HCT116 (cell line): ENCODE measurements at regions of chr5 and their contacts with region 1.

Region 1: DNA sequence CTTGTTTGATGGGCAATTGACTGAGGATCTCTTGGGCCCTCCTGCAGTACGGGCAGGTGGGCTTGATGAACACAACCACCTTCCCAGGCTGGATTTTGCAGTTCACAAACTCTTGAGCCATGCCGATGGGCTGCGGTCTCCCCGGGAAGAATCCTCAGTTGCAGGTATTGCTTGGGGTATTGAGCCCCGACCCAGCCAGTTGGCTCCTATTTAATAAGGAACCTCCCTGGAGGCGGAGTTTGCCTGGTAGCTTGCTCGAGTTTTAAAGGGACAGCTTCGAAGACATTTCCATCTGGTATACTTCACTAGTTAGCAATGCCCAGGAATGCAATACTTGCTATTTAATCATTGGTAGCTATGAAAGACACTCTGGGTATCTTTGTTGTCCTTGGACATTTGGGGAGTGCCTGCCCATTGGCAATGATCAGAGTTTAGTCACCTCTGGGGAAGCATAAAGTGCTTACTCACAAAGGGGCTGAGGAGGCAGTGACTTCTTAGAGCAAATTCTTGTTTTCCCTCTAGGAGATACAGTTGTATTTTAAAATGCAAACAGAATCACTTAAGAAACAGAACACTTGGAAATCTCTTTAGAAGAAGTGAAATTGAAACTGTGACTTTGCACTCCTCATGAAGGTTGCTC is at the start of gene GLRX:
- DNase-seq: peak; percentile 80
- ATAC-seq: peak; percentile 77
- H3K4me3 ChIP-seq: peak within 1 kb of the TSS; percentile 69 to 75
- H3K27ac ChIP-seq: peak within 1 kb of the TSS; percentile 70
- H3K4me1 ChIP-seq: peaks cover 25 to 33% of the 10 kb centered on the region in 2 experiments
- H3K27me3 ChIP-seq: no peaks in the 10 kb centered on the region
- CTCF ChIP-seq: no peak
- POLR2A ChIP-seq: no peak
- RAD21 ChIP-seq: no peak
- total RNA-seq, gene GLRX: 29.3 TPM

Region 2: GRCh38 chr5:95646554-95647431 is 175.9 kb before region 1 on chr5 and contains the start of gene RFESD:
- CTCF ChIA-PET with region 1: interaction called, 3 read pairs
- POLR2A ChIA-PET with region 1: interaction called, 10 read pairs
- RAD21 ChIA-PET with region 1: no interaction called
- intact Hi-C with region 1: no loop called
- DNase-seq: peak; percentile 91
- ATAC-seq: peak; percentile 93
- H3K4me3 ChIP-seq: peak within 1 kb of the TSS; percentile 48 to 65
- H3K27ac ChIP-seq: peak within 1 kb of the TSS; percentile 76
- H3K4me1 ChIP-seq: peaks cover 9 to 33% of the 10 kb centered on the region in 2 experiments; a peak in 3 of 4 replicates
- H3K27me3 ChIP-seq: no peaks in the 10 kb centered on the region
- CTCF ChIP-seq: peak in 1 of 3 experiments; percentile 10; a peak in 1 of 6 replicates
- POLR2A ChIP-seq: peak; percentile 72
- RAD21 ChIP-seq: peak; percentile 34
- total RNA-seq, gene RFESD: 4.1 TPM

Region 3: GRCh38 chr5:95709967-95710685 is 112.5 kb before region 1 on chr5:
- CTCF ChIA-PET with region 1: no interaction called
- POLR2A ChIA-PET with region 1: interaction called, 3 read pairs
- RAD21 ChIA-PET with region 1: no interaction called
- intact Hi-C with region 1: loop called (anchors 2 kb)
- DNase-seq: peak; percentile 71
- ATAC-seq: peak; percentile 52
- H3K4me3 ChIP-seq: peak overlapping the region in 1 of 2 experiments; percentile 54; a peak in 3 of 4 replicates
- H3K27ac ChIP-seq: peak overlapping the region; percentile 90
- H3K4me1 ChIP-seq: peaks cover 48 to 63% of the 10 kb centered on the region in 2 experiments
- H3K27me3 ChIP-seq: no peaks in the 10 kb centered on the region
- CTCF ChIP-seq: no peak
- POLR2A ChIP-seq: no peak
- RAD21 ChIP-seq: no peak

Region 4: GRCh38 chr5:95730730-95731570 is 91.7 kb before region 1 on chr5 and contains the start of gene RHOBTB3:
- CTCF ChIA-PET with region 1: no interaction called
- POLR2A ChIA-PET with region 1: interaction called, 3 read pairs
- RAD21 ChIA-PET with region 1: no interaction called
- intact Hi-C with region 1: loop called (anchors 5 kb)
- DNase-seq: peak; percentile 63
- ATAC-seq: peak; percentile 76
- H3K4me3 ChIP-seq: peak within 1 kb of the TSS; percentile 80 to 84
- H3K27ac ChIP-seq: peak within 1 kb of the TSS; percentile 85
- H3K4me1 ChIP-seq: peaks cover 48 to 57% of the 10 kb centered on the region in 2 experiments
- H3K27me3 ChIP-seq: no peaks in the 10 kb centered on the region
- CTCF ChIP-seq: no peak
- POLR2A ChIP-seq: peak; percentile 60
- RAD21 ChIP-seq: 0 out of 2 replicates have a peak, but pooled peaks have one; percentile 13
- total RNA-seq, gene RHOBTB3: 84.3 TPM

Region 5: GRCh38 chr5:95781101-95781583 is 41.5 kb before region 1 on chr5:
- CTCF ChIA-PET with region 1: interaction called, 13 read pairs
- POLR2A ChIA-PET with region 1: interaction called, 7 read pairs
- RAD21 ChIA-PET with region 1: interaction called in 1 of 2 experiments, 5 read pairs
- intact Hi-C with region 1: no loop called
- DNase-seq: peak; percentile 62
- ATAC-seq: peak; percentile 99
- H3K4me3 ChIP-seq: no peak overlapping the region
- H3K27ac ChIP-seq: no peak overlapping the region
- H3K4me1 ChIP-seq: no peaks in the 10 kb centered on the region
- H3K27me3 ChIP-seq: no peaks in the 10 kb centered on the region
- CTCF ChIP-seq: peak; percentile 88 to 99 (median 95)
- POLR2A ChIP-seq: no peak
- RAD21 ChIP-seq: peak; percentile 94

Region 6: GRCh38 chr5:95835682-95836385 is 13.2 kb after region 1 on chr5:
- CTCF ChIA-PET with region 1: interaction called, 6 read pairs
- POLR2A ChIA-PET with region 1: interaction called, 14 read pairs
- RAD21 ChIA-PET with region 1: no interaction called
- intact Hi-C with region 1: no loop called
- DNase-seq: no peak
- ATAC-seq: no peak
- H3K4me3 ChIP-seq: no peak overlapping the region
- H3K27ac ChIP-seq: no peak overlapping the region
- H3K4me1 ChIP-seq: no peaks in the 10 kb centered on the region; a peak in 1 of 4 replicates
- H3K27me3 ChIP-seq: no peaks in the 10 kb centered on the region
- CTCF ChIP-seq: no peak
- POLR2A ChIP-seq: no peak
- RAD21 ChIP-seq: no peak

Region 7: DNA sequence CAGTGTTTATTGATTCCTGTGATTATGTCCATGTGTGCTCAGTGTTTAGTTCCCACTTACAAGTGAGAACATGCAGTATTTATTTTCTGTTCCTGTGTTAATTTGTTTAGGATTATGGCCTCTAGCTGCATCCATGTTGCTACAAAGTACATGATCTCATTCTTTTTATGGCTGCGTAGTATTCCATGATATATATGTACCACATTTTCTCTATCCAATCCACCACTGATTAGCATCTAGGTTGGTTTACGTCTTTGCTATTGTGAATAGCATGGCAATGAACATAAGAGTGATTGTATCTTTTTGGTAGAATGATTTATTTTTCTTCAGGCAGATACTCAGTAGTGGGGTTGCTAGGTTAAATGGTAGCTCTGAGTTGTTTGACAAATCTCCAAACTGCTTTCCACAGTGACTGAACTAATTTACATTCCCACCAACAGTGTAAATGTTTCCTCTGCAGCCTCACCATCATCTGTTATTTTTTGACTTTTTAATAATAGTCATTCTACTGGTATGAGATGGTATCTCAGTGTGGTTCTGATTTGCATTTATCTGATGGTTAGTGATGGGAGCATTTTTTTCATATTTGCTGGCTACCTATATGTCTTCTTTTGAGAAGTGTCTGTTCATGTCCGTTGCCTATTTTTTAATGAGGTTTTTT is 186.5 kb after region 1 on chr5:
- CTCF ChIA-PET with region 1: no interaction called
- POLR2A ChIA-PET with region 1: no interaction called
- RAD21 ChIA-PET with region 1: no interaction called
- intact Hi-C with region 1: no loop called
- DNase-seq: no peak
- ATAC-seq: no peak
- H3K4me3 ChIP-seq: no peak overlapping the region
- H3K27ac ChIP-seq: no peak overlapping the region
- H3K4me1 ChIP-seq: no peaks in the 10 kb centered on the region
- H3K27me3 ChIP-seq: no peaks in the 10 kb centered on the region
- CTCF ChIP-seq: no peak
- POLR2A ChIP-seq: no peak
- RAD21 ChIP-seq: no peak